ENCODE measurements at regions of chr2 and their contacts with region 1.

Region 1: DNA sequence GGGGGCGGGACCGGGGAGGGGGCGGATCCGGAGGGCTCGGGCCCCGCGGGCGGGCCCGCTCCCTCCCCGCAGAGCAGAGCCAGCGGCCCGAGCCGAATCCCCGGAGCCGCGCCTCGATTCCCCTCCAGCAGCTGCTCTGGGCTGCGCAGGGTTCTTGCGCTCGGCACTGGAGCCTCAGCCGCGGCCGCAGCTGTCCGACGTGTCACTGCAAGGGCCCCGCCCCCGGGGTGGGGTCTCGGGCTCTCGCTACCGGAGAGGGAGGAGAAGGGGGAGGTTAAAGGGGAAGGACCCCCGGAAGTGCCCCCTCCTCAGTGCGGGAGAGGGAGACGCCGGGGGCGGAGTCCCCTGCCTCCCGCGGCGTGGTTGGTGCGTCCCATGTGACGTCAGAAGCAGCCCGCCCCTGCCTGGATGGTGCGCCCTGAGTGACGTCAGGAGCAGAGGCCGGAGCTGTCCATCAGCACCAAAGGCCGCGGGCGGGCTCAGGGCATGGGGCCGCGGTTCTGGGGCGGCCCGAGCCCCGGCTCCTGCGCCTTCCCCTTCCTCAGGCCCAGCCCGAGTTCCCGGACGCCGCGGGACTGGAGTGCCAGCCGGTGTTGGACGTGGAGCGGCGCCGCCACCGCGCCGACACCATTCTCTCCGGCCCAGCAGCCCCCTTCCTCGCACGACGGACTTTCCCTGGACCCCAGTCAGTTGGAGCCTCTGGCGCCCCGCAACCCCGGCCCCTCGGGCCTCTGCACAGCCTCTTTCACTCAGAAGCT is at the starts of genes CHPF and TMEM198:
- DNase-seq: peak; percentile 99 to 100 (median 99)
- H3K4me3 ChIP-seq: peak within 1 kb of the TSS; percentile 40 to 86 (median 61)
- H3K27ac ChIP-seq: peak within 1 kb of the TSS; percentile 54 to 96 (median 84)
- H3K4me1 ChIP-seq: peaks cover 10 to 24% of the 10 kb centered on the region in 2 donors
- H3K27me3 ChIP-seq: no peaks in the 10 kb centered on the region
- CTCF ChIP-seq: no peak
- POLR2A ChIP-seq: peak; percentile 47 to 82
- total RNA-seq, gene CHPF: 42.0 to 196 (median 80.3) TPM
- total RNA-seq, gene TMEM198: 3.3 to 16.2 (median 10.1) TPM

Region 2: GRCh38 chr2:219642465-219643080 is 98.8 kb after region 1 on chr2:
- intact Hi-C with region 1: loop called (anchors 2 to 5 kb)
- DNase-seq: peak; percentile 96 to 99 (median 98)
- H3K4me3 ChIP-seq: no peak overlapping the region
- H3K27ac ChIP-seq: peak overlapping the region in 2 of 5 donors; percentile 65 to 69
- H3K4me1 ChIP-seq: peaks cover 12 to 30% of the 10 kb centered on the region in 2 donors
- H3K27me3 ChIP-seq: no peaks in the 10 kb centered on the region
- CTCF ChIP-seq: peak; percentile 99 to 100 (median 100)
- POLR2A ChIP-seq: no peak

Region 3: GRCh38 chr2:219689676-219690628 is 146.2 kb after region 1 on chr2:
- intact Hi-C with region 1: loop called (anchors 5 kb)
- DNase-seq: peak; percentile 31 to 79 (median 56)
- H3K4me3 ChIP-seq: no peak overlapping the region
- H3K27ac ChIP-seq: peak overlapping the region in 1 of 5 donors; percentile 51
- H3K4me1 ChIP-seq: no peaks in the 10 kb centered on the region
- H3K27me3 ChIP-seq: peaks cover 10% of the 10 kb centered on the region
- CTCF ChIP-seq: peak; percentile 72 to 84 (median 76)
- POLR2A ChIP-seq: no peak

Measured in adrenal gland (tissue), 19 donors.